Natural killer cell (primary cell): ENCODE measurements at regions of chr4 and their contacts with region 1.

Region 1: GRCh38 chr4:112765317-112765975 is 128.5 kb downstream of the LARP7 start:
- DNase-seq: peak in 1 of 2 donors; percentile 25
- ATAC-seq: no peak
- H3K4me3 ChIP-seq: no peak overlapping the region
- H3K4me3 Mint-ChIP-seq: no peak overlapping the region
- H3K27ac ChIP-seq: no peak overlapping the region
- H3K27ac Mint-ChIP-seq: no peak overlapping the region
- H3K4me1 ChIP-seq: no peaks in the 10 kb centered on the region
- H3K4me1 Mint-ChIP-seq: no peaks in the 10 kb centered on the region
- H3K27me3 ChIP-seq: no peaks in the 10 kb centered on the region
- H3K27me3 Mint-ChIP-seq: peaks cover 0 to 2% of the 10 kb centered on the region in 2 donors
- CTCF ChIP-seq: no peak

Region 2: GRCh38 chr4:112327965-112328733 is 437.3 kb before region 1 on chr4:
- intact Hi-C with region 1: loop called (anchors 10 kb)
- DNase-seq: peak in 1 of 2 donors; percentile 71
- ATAC-seq: peak; percentile 42 to 61 (median 54)
- H3K4me3 ChIP-seq: no peak overlapping the region
- H3K4me3 Mint-ChIP-seq: no peak overlapping the region
- H3K27ac ChIP-seq: no peak overlapping the region
- H3K27ac Mint-ChIP-seq: no peak overlapping the region
- H3K4me1 ChIP-seq: no peaks in the 10 kb centered on the region
- H3K4me1 Mint-ChIP-seq: peaks cover 0 to 1% of the 10 kb centered on the region in 2 donors
- H3K27me3 ChIP-seq: no peaks in the 10 kb centered on the region
- H3K27me3 Mint-ChIP-seq: no peaks in the 10 kb centered on the region
- CTCF ChIP-seq: peak; percentile 33

Region 3: GRCh38 chr4:112636688-112637551 is 128.5 kb before region 1 on chr4 and contains the starts of genes LARP7 and ZGRF1:
- intact Hi-C with region 1: loop called (anchors 1 kb)
- DNase-seq: peak; percentile 95 to 99
- ATAC-seq: peak; percentile 87 to 94 (median 87)
- H3K4me3 ChIP-seq: peak within 1 kb of the TSS; percentile 66
- H3K4me3 Mint-ChIP-seq: no peak within 1 kb of the TSS
- H3K27ac ChIP-seq: peak within 1 kb of the TSS; percentile 93
- H3K27ac Mint-ChIP-seq: no peak within 1 kb of the TSS
- H3K4me1 ChIP-seq: peaks cover 6% of the 10 kb centered on the region
- H3K4me1 Mint-ChIP-seq: peaks cover 14 to 15% of the 10 kb centered on the region in 2 donors
- H3K27me3 ChIP-seq: no peaks in the 10 kb centered on the region
- H3K27me3 Mint-ChIP-seq: no peaks in the 10 kb centered on the region
- CTCF ChIP-seq: peak; percentile 72
- total RNA-seq, gene LARP7: 45.7 to 55.4 (median 48.4) TPM
- total RNA-seq, gene ZGRF1: 13.0 to 25.9 (median 20.0) TPM

Region 4: GRCh38 chr4:112648263-112649054 is 117.0 kb before region 1 on chr4:
- intact Hi-C with region 1: no loop called
- DNase-seq: no peak
- ATAC-seq: no peak
- H3K4me3 ChIP-seq: no peak overlapping the region
- H3K4me3 Mint-ChIP-seq: no peak overlapping the region
- H3K27ac ChIP-seq: no peak overlapping the region
- H3K27ac Mint-ChIP-seq: no peak overlapping the region
- H3K4me1 ChIP-seq: no peaks in the 10 kb centered on the region
- H3K4me1 Mint-ChIP-seq: peaks cover 0 to 2% of the 10 kb centered on the region in 2 donors
- H3K27me3 ChIP-seq: no peaks in the 10 kb centered on the region
- H3K27me3 Mint-ChIP-seq: no peaks in the 10 kb centered on the region
- CTCF ChIP-seq: no peak

Region 5: DNA sequence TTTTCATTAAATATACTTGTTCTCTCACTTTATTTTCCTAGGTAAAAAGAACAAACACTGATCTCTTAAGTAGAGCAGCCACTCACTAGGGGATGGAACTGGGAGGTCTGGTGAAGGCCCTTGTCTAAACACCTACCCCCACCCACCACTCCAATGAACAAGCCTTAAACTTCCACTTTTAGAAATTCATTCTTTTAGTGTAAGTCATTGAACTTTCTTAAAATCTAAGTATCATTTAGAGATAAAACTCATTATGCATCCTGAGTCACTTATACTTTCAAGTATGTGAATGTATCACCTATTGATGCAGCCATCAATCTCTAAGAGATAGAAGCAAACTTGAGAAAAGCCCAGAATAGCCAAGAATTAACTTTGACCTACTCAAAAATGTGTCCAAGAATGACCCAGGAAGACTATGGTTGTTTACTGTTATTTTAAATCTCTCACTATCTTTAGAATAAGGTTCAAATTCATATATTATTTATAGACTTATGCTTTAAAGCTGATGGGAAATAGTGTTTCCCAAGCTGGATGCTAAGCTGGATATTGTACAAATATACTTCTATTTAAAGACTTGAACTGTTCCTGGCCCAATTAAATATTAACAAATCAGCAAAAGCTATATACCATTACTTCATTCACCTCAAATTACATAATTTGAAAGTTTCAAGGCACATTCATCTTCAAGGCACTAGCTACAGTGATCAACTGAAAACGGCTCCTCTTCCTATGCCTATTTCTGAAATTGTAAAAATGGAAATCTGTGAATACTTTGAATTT is 946.6 kb after region 1 on chr4:
- intact Hi-C with region 1: no loop called
- DNase-seq: no peak
- ATAC-seq: no peak
- H3K4me3 ChIP-seq: no peak overlapping the region
- H3K4me3 Mint-ChIP-seq: no peak overlapping the region
- H3K27ac ChIP-seq: no peak overlapping the region
- H3K27ac Mint-ChIP-seq: no peak overlapping the region
- H3K4me1 ChIP-seq: no peaks in the 10 kb centered on the region
- H3K4me1 Mint-ChIP-seq: peaks cover 13 to 14% of the 10 kb centered on the region in 2 donors
- H3K27me3 ChIP-seq: no peaks in the 10 kb centered on the region
- H3K27me3 Mint-ChIP-seq: no peaks in the 10 kb centered on the region
- CTCF ChIP-seq: no peak